ENCODE measurements at regions of chr16 and their contacts with region 1.

Region 1: GRCh38 chr16:21952793-21953540 is at the start of gene UQCRC2:
- DNase-seq: peak; percentile 89 to 93 (median 91)
- ATAC-seq: peak; percentile 95 to 97 (median 96)
- H3K4me3 ChIP-seq: peak within 1 kb of the TSS; percentile 52 to 97 (median 84)
- H3K27ac ChIP-seq: peak within 1 kb of the TSS; percentile 94 to 99 (median 97)
- H3K4me1 ChIP-seq: peaks cover 0 to 61% (median 40%) of the 10 kb centered on the region in 12 donors
- H3K27me3 ChIP-seq: no peaks in the 10 kb centered on the region
- CTCF ChIP-seq: no peak
- POLR2A ChIP-seq: peak; percentile 11 to 63
- total RNA-seq, gene UQCRC2: 458 to 1,082 (median 779) TPM

Region 2: DNA sequence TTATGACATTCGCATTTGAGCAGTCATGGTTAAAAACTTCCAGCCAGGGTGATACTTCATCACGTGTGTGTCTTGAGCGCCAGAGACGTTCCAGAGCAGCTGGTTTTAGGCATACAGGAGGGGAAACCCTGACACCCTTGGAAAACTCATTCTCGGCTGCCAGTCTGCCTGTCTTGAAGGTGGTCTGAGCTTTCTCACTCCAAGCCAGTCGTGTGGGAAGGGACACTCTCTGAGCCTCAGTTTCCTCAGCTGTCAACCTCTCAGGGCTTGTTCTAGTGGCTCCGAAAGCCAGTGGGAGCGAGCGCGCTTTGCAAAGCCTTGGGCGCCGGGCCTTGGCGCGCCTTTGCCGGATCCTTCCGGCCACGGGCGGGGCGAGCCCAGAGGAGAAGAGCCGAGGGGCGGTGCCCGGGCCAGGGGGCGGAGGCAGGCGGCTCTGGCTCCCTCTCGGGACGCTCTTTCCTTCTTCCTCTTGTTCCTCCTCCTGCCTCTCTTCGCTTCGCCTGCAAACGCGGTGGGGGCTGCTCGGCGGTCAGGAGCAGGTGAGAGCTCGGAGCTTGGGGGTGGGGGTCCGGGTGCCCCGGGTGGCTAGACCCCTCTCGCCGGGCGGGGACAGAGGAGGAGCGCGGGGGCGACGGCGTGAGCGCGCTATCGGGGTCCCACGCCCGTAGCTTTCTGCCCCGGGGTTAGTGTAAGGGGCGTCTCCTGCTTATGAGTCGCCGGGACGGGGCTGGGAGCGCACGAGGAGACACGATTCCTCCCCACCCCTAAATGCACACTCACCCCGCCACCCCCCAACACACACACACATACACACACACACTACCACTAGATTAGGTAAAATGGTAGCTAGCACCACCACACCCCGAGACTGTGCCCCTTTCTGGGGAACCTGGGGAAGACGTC is 794.5 kb before region 1 on chr16 and contains the start of gene LDAF1:
- intact Hi-C with region 1: loop called in 1 of 10 experiments (anchors 5 kb)
- DNase-seq: peak; percentile 85 to 93 (median 88)
- ATAC-seq: peak; percentile 81 to 93 (median 90)
- H3K4me3 ChIP-seq: peak within 1 kb of the TSS; percentile 74 to 95 (median 88)
- H3K27ac ChIP-seq: peak within 1 kb of the TSS; percentile 72 to 94 (median 88)
- H3K4me1 ChIP-seq: peaks cover 17 to 59% (median 40%) of the 10 kb centered on the region in 12 donors
- H3K27me3 ChIP-seq: no peaks in the 10 kb centered on the region
- CTCF ChIP-seq: peak in 3 of 12 donors; percentile 12 to 14 (median 13)
- POLR2A ChIP-seq: peak in 1 of 2 donors; percentile 69
- total RNA-seq, gene LDAF1: 87.0 to 334 (median 162) TPM

Region 3: DNA sequence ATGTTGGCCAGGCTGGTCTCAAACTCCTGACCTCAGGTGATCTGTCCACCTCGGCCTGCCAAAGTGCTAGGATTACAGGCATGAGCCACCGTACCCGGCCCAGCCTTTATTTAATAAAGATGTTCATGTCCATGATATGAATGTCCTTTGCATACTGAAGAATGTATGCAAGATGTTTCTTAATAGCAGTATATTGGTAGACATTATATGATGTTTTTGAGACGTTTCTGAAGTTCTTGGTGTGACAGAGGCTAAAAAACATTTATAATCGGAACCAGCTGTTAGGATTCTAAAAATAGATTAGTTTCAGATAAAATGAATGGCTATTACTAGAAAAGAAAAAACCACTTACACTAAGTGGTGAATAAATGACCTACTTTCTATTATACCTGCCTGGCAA is 36.2 kb after region 1 on chr16:
- intact Hi-C with region 1: loop called in 2 of 10 experiments (anchors 5 kb)
- DNase-seq: no peak
- ATAC-seq: no peak
- H3K4me3 ChIP-seq: no peak overlapping the region
- H3K27ac ChIP-seq: no peak overlapping the region
- H3K4me1 ChIP-seq: peaks cover 7 to 58% (median 40%) of the 10 kb centered on the region in 12 donors
- H3K27me3 ChIP-seq: no peaks in the 10 kb centered on the region
- CTCF ChIP-seq: no peak
- POLR2A ChIP-seq: no peak

Region 4: DNA sequence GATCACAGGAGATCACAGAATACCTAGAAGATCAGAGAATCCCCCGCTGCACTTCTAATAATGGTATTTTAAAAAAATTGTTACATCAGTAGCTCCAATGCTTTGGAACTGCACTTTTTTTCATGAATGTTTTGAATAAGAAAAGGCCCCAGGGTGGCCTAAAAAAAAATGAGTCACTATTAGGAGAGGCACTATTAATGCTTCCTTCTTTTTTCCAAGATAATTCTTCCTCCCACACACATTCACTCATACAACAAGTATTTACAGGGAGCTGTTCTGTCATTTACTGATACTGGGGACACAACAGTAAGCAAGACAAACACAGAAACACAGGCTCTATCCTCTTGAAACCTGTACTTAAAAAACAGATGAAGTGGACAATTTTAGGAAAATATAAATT is 48.6 kb after region 1 on chr16:
- intact Hi-C with region 1: loop called in 1 of 10 experiments (anchors 5 kb)
- DNase-seq: no peak
- ATAC-seq: peak in 1 of 4 donors; percentile 57
- H3K4me3 ChIP-seq: no peak overlapping the region
- H3K27ac ChIP-seq: no peak overlapping the region
- H3K4me1 ChIP-seq: peaks cover 0 to 32% (median 10%) of the 10 kb centered on the region in 12 donors
- H3K27me3 ChIP-seq: no peaks in the 10 kb centered on the region
- CTCF ChIP-seq: no peak
- POLR2A ChIP-seq: no peak

Region 5: GRCh38 chr16:22077700-22078313 is 124.8 kb after region 1 on chr16:
- intact Hi-C with region 1: loop called in 2 of 10 experiments (anchors 5 kb)
- DNase-seq: peak in 4 of 5 donors; percentile 38 to 55 (median 51)
- ATAC-seq: peak in 3 of 4 donors; percentile 44 to 55 (median 54)
- H3K4me3 ChIP-seq: no peak overlapping the region
- H3K27ac ChIP-seq: no peak overlapping the region
- H3K4me1 ChIP-seq: peaks cover 0 to 17% (median 0%) of the 10 kb centered on the region in 12 donors
- H3K27me3 ChIP-seq: no peaks in the 10 kb centered on the region
- CTCF ChIP-seq: peak; percentile 72 to 89 (median 82)
- POLR2A ChIP-seq: no peak

Region 6: DNA sequence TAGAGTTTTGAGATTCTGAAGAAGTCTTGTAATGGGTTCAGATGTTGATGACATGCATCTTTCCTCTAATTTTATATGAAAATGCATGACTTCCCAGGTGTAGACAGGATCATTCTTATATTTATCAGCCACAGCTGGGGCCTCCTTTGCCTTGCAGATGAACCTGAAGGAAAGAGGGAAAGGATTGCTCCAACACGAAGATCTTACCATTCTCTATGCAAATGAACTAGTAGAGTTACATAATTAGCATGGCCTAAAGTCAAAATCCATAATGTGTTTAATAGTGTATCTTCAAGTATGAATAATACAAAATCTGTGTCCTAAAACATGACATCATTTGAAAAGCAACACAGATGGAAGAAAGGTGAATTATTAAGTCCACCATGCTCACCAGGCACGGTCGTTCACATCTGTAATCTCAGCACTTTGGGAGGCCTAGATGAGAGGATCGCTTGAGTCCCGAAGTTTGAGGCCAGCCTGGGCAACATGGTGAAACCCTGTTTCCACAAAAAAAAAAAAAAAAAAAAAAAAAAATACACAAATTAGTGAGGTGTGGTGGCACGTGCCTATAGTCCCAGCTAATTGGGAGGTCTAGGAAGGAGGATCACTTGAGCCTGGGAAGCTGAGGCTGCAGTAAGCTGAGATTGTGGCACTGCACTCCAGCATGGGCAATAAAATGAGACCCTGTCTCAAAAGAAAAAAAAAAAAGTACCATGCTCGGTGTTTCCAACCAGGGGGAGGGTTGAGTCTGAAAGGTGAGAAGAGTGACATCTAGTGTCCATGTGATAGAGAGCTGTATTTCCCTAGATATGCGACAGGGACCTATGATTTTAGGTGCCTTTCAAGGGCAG is 145.7 kb after region 1 on chr16:
- intact Hi-C with region 1: loop called in 1 of 10 experiments (anchors 5 kb)
- DNase-seq: no peak
- ATAC-seq: peak in 3 of 4 donors; percentile 51 to 72 (median 67)
- H3K4me3 ChIP-seq: no peak overlapping the region
- H3K27ac ChIP-seq: no peak overlapping the region
- H3K4me1 ChIP-seq: peaks cover 0 to 3% (median 0%) of the 10 kb centered on the region in 12 donors
- H3K27me3 ChIP-seq: peaks cover 0 to 3% (median 0%) of the 10 kb centered on the region in 9 donors
- CTCF ChIP-seq: peak; percentile 40 to 70 (median 56)
- POLR2A ChIP-seq: no peak

Measured in heart left ventricle (tissue), 16 donors.